Naive thymus-derived CD4-positive, alpha-beta T cell (primary cell): ENCODE measurements at regions of chr20 and their contacts with region 1.

Region 1: DNA sequence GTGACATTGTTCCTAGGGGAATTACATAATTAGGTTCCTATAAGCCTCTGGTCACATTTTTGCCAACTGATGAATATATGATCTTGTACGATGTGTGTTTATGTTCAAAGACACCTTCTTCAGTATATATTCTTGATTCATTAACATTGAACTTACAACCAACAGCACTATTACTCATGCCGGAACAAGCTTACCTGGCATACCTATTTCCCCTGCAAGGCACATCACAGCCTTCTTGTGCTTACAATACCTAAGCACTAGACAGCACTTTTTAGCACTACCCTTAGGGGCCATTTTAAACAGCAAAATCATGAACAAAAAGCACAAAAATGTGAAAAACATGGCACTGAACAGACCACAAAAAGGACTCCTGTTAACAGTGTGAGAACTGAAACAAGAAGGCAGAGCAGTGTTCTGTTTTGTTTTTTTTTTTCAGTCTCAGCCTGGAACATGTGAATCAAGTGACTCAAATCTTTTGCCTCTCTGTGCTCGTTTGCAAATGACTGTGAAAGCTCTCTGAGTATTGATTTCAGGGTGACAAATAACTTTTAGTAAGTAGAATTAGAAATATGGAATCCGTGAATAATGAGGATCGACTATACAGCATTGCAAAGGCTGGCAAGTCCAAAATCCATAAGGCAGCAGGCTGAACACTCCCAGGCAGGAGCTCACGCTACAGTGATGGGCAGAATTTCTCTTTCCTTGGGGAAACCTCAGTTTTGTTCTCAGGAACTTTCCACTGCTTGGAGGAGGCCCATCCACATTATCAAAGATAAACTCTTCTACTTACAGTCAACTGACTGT is 102.3 kb upstream of the TSHZ2 start:
- DNase-seq: no peak
- ATAC-seq: no peak
- H3K4me3 ChIP-seq: no peak overlapping the region
- H3K4me3 Mint-ChIP-seq: no peak overlapping the region
- H3K27ac ChIP-seq: no peak overlapping the region
- H3K27ac Mint-ChIP-seq: no peak overlapping the region
- H3K4me1 ChIP-seq: no peaks in the 10 kb centered on the region
- H3K4me1 Mint-ChIP-seq: peaks cover 1 to 7% (median 5%) of the 10 kb centered on the region in 7 donors
- H3K27me3 ChIP-seq: no peaks in the 10 kb centered on the region
- H3K27me3 Mint-ChIP-seq: peaks cover 0 to 11% (median 0%) of the 10 kb centered on the region in 5 donors

Region 2: GRCh38 chr20:52913650-52914387 is 43.9 kb after region 1 on chr20:
- CTCF ChIA-PET with region 1: no interaction called
- POLR2A ChIA-PET with region 1: no interaction called
- intact Hi-C with region 1: loop called in 1 of 2 experiments (anchors 1 kb)
- DNase-seq: no peak
- ATAC-seq: no peak
- H3K4me3 ChIP-seq: no peak overlapping the region
- H3K4me3 Mint-ChIP-seq: no peak overlapping the region
- H3K27ac ChIP-seq: no peak overlapping the region
- H3K27ac Mint-ChIP-seq: no peak overlapping the region
- H3K4me1 ChIP-seq: no peaks in the 10 kb centered on the region
- H3K4me1 Mint-ChIP-seq: peaks cover 0 to 3% (median 0%) of the 10 kb centered on the region in 7 donors
- H3K27me3 ChIP-seq: no peaks in the 10 kb centered on the region
- H3K27me3 Mint-ChIP-seq: peaks cover 0 to 4% (median 0%) of the 10 kb centered on the region in 5 donors